Activated CD4-positive, alpha-beta T cell treated with anti-CD3 and anti-CD28 coated beads, Interleukin-2, amount 10 ng/mL, durations not matched to agents 24 days and 14 days (primary cell): ENCODE measurements at regions of chr5 and their contacts with region 1.

Region 1: DNA sequence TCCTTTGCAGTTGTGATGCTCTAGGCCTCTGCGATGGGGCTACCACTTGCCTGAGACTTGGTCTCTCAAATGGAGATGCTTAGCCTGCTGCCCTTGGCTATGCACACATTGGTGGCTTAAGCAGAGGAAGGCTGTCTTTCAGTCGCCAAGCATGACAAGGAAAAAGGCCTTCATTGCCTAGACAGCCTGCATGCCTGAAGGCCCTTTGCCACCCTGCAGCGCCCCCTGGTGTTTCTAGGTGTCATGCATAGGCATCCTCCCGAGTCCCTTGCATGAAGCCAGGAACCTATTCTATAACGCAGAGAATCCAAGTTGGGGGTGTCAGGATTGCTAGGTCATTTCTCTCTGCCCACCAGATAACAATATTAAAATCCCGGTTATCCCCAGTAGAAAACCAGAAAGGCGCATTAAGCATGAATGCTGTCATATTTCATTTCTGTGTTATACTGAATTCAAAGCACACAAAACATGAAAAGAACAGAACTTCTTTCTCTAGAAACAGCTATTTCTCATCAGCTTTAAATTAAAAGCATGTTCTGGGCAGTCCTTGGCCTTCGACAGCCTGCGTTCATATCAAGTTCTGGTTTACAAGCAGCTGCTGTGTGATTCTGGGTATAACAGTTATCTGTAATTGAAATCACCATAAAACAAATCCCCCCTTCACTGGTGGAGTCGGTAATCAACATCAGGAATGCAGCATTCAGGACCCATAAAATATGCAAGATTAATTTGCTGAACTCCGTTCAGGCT is 59.7 kb upstream of the TRPC7 start:
- DNase-seq: peak; percentile 84
- H3K4me3 Mint-ChIP-seq: no peak overlapping the region
- H3K27ac Mint-ChIP-seq: no peak overlapping the region
- H3K4me1 Mint-ChIP-seq: no peaks in the 10 kb centered on the region
- H3K27me3 Mint-ChIP-seq: no peaks in the 10 kb centered on the region

Region 2: DNA sequence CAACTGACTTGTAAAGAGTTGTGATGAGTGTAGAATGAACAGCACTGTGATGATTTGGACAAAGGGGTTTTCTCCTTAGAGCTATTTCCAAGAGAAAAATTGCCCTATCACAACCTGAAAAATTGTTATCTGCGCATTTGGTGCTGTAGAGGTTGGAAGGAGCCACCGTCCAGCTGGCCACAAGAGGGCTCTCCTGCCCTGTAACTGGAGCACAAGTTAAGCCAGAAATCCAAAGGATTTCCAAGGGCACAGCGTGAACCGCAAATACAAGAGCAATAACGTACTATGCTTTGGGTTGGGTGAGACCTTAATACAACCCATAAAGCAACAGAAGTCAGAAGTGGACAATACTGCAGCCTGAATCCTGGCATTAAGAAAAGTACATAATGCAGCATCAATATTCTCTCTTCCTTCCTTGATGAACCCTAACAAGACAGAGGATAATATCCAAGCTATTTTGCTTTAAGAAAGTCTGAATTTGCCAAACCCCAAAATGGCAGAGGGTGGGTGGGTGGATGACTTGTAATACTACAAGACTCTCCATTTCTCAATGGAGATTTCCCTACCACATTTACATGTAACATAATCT is 175.2 kb before region 1 on chr5:
- intact Hi-C with region 1: loop called (anchors 10 kb)
- DNase-seq: no peak
- H3K4me3 Mint-ChIP-seq: no peak overlapping the region
- H3K27ac Mint-ChIP-seq: no peak overlapping the region
- H3K4me1 Mint-ChIP-seq: no peaks in the 10 kb centered on the region
- H3K27me3 Mint-ChIP-seq: peaks cover 4% of the 10 kb centered on the region

Region 3: DNA sequence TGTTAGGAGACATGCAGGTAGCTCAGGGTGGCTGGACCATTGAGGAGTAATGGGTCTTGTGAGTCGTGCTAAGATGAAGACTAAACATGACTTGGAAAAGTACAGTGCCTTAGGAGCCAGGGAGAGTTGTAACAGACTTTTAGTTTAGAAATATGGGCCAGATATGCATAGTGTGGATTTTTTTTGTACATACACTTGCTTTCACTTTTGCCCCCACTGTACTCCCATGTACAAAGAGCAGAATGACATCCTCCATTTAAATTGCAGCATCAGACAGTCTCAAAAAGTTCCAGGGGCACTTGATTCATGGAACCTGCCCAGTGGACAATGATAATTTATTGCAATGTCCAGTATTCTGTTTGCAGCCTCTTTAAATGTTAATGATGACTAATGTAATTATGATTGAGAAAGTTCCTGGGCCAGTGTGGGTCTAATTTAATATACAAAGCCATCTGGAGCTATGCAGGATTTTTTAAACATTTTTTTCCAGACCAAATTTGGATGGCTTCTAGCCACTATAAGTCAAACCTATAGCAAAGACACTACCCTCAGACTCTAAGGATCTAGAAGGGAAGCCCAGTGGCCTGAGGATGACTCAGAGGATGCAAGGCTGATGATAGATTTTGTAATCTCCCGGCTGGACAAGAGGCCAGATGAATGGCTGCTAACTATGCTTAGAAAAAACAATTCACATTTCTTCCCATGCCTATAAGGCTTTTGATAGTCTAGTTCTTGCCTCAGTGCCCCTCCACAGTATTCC is 139.7 kb before region 1 on chr5:
- intact Hi-C with region 1: no loop called
- DNase-seq: no peak
- H3K4me3 Mint-ChIP-seq: no peak overlapping the region
- H3K27ac Mint-ChIP-seq: no peak overlapping the region
- H3K4me1 Mint-ChIP-seq: no peaks in the 10 kb centered on the region
- H3K27me3 Mint-ChIP-seq: no peaks in the 10 kb centered on the region